ENCODE measurements at regions of chr2 and their contacts with region 1.

Region 1: DNA sequence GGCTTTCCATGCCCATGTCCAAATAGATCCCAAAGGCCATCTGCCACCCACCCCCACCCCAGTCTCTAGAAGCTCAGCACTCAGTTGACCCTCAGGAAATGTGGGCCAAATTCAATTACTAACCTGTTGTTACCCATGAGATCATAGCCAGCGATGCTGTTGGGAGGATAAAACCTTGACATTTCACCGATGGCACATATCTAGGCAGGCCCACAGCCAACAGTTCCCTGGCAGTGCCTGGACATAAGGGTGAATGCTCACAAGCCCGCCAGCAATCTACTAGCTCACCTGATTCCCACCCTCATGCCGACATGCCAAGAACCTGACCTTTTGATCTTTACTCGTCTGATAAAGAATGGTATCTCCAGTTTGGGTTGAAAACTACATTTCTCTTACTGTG is 11.8 kb upstream of the ACOXL start:
- DNase-seq: no peak
- H3K4me3 ChIP-seq: no peak overlapping the region
- H3K27me3 ChIP-seq: peaks cover 13% of the 10 kb centered on the region
- CTCF ChIP-seq: no peak

Region 2: GRCh38 chr2:110690083-110690965 is 30.2 kb before region 1 on chr2:
- CTCF ChIA-PET with region 1: no interaction called
- POLR2A ChIA-PET with region 1: interaction called, 21 read pairs
- DNase-seq: no peak
- H3K4me3 ChIP-seq: no peak overlapping the region
- H3K27me3 ChIP-seq: peaks cover 21% of the 10 kb centered on the region
- CTCF ChIP-seq: no peak

Region 3: DNA sequence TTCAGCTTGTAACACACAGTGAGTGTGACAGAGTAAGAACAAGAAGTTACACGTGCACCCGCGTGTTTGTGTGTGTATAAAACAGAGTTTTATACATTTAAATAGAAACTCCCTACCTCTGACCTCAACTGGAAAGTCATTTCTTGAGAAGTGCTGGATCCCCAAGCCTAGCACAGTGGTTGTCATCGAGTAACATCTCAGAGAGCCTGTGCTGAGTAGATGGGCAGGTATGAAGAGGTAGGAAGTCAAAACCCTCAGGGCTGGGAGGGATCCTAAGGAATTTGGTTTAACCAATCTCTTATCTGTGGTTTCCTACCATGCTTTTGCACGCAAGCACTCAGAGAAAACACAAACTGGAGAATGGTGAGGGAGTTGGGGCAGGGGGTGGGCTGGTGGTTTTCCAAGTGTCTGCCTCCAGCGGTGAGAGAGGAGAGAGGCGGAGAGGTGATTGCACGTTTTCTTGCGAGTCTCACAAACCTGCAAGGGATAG is 21.0 kb after region 1 on chr2:
- CTCF ChIA-PET with region 1: no interaction called
- POLR2A ChIA-PET with region 1: no interaction called
- DNase-seq: no peak
- H3K4me3 ChIP-seq: no peak overlapping the region
- H3K27me3 ChIP-seq: peaks cover 17% of the 10 kb centered on the region
- CTCF ChIP-seq: no peak

Region 4: DNA sequence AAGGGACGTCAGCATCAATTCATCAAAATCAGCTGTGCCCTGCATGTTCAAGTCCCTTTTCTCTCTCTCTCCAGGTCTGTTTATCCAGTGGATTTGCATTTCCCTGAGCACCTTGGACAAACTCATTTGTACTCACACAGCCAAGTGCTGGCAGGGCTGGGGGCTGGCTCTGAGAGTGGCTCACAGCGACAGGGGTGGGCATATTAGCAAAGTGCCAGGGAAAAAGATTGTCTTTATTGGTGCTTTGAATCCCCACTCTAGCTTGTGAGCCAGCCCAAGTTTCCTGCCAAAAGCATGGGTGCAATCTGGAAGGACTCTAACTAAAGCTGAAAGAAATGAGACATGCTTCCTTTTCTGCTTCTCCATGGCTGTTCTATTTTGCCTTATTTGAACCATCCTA is 68.4 kb after region 1 on chr2:
- CTCF ChIA-PET with region 1: no interaction called
- POLR2A ChIA-PET with region 1: no interaction called
- DNase-seq: no peak
- H3K4me3 ChIP-seq: no peak overlapping the region
- H3K27me3 ChIP-seq: peaks cover 5% of the 10 kb centered on the region
- CTCF ChIP-seq: no peak

Region 5: GRCh38 chr2:110804915-110805314 is 84.4 kb after region 1 on chr2:
- CTCF ChIA-PET with region 1: no interaction called
- POLR2A ChIA-PET with region 1: no interaction called
- DNase-seq: no peak
- H3K4me3 ChIP-seq: no peak overlapping the region
- H3K27me3 ChIP-seq: peaks cover 11% of the 10 kb centered on the region
- CTCF ChIP-seq: no peak